Activated CD8-positive, alpha-beta T cell treated with anti-CD3 and anti-CD28 coated beads, Interleukin-2, amount 10 ng/mL, durations not matched to agents 7 days and 5 days (primary cell): ENCODE measurements at regions of chr5 and their contacts with region 1.

Region 1: GRCh38 chr5:113524927-113525326 is 11.4 kb downstream of the YTHDC2 start:
- DNase-seq: no peak
- ATAC-seq: peak; percentile 64
- H3K4me3 Mint-ChIP-seq: no peak overlapping the region
- H3K27ac Mint-ChIP-seq: peak overlapping the region; percentile 55
- H3K4me1 Mint-ChIP-seq: peaks cover 28% of the 10 kb centered on the region
- H3K27me3 Mint-ChIP-seq: no peaks in the 10 kb centered on the region

Region 2: DNA sequence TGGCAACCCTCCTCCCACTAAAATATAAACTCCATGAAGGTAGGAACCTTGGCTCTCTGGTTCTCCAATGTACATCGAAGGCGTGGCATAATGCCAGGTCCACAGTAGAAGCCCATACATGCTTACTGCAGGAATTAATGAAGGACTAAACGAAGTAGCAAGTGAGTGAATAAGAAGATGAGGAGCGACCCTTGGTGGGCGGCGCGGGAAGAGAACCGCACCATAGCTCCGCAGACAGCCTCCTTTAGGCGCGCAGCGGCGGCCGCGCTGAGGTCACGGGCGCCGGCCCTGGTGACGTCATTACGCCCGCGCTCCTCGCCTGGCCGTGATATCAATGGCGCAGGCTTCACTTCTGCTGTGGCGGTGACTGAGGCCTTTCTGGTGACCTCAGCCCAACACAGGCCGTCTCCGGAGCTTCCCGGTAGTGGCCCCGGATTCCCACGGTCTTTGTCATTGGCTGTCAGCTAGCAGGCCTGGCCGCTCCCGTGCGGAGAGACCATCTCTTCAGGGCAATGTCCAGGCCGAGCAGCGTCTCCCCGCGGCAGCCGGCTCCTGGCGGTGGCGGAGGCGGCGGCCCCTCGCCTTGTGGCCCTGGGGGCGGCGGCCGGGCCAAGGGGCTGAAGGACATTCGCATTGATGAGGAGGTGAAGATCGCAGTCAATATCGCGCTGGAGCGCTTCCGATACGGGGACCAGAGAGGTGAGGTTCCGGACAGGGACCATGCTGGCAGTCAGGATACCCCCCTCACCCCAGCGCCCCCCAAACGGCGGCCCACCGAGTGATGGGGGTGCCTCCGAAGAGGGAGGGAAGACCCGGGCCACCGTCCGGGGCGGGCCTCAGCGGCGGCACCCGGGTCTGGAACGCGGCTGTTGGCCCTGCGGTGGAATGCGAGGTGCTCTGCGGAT is 11.3 kb before region 1 on chr5 and contains the start of gene YTHDC2:
- CTCF ChIA-PET with region 1: interaction called, 6 read pairs
- POLR2A ChIA-PET with region 1: interaction called, 10 read pairs
- DNase-seq: peak; percentile 90
- ATAC-seq: peak; percentile 94
- H3K4me3 Mint-ChIP-seq: peak within 1 kb of the TSS; percentile 92
- H3K27ac Mint-ChIP-seq: peak within 1 kb of the TSS; percentile 92
- H3K4me1 Mint-ChIP-seq: peaks cover 39% of the 10 kb centered on the region
- H3K27me3 Mint-ChIP-seq: peaks cover 16% of the 10 kb centered on the region
- total RNA-seq, gene YTHDC2: 30.3 to 34.1 TPM

Region 3: GRCh38 chr5:113562828-113563400 is 38.0 kb after region 1 on chr5:
- CTCF ChIA-PET with region 1: no interaction called
- POLR2A ChIA-PET with region 1: no interaction called
- DNase-seq: no peak
- ATAC-seq: no peak
- H3K4me3 Mint-ChIP-seq: no peak overlapping the region
- H3K27ac Mint-ChIP-seq: no peak overlapping the region
- H3K4me1 Mint-ChIP-seq: no peaks in the 10 kb centered on the region
- H3K27me3 Mint-ChIP-seq: no peaks in the 10 kb centered on the region